Calu3 (cell line): ENCODE measurements at regions of chr7 and their contacts with region 1.

Region 1: GRCh38 chr7:41107668-41108448 is 595.0 kb downstream of the INHBA start:
- DNase-seq: peak; percentile 91
- H3K4me3 Mint-ChIP-seq: peak overlapping the region; percentile 53
- H3K27ac Mint-ChIP-seq: peak overlapping the region; percentile 96
- H3K4me1 Mint-ChIP-seq: peaks cover 70% of the 10 kb centered on the region
- H3K27me3 Mint-ChIP-seq: no peaks in the 10 kb centered on the region
- CTCF ChIP-seq: no peak

Region 2: DNA sequence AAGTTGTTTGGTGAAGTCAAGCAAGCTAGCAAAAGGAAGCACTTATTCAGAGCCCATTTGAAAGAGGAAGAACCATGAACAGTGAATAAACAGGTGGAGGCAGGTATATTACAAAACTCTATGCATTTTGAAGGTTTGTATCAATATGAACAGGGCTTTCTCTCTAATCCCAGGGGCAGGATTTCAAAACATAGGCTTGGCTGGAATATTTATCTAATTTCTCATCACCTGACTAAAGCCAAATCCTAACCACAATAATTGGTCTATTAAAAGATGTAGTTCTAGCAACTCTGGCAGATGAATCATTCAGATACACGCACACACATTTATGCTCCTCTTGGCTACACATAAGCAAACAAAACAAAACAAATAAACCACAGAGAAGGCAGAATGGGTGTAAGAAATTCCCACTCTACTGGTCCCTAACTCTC is 40.7 kb after region 1 on chr7:
- CTCF ChIA-PET with region 1: no interaction called
- intact Hi-C with region 1: loop called (anchors 2 kb)
- DNase-seq: no peak
- H3K4me3 Mint-ChIP-seq: no peak overlapping the region
- H3K27ac Mint-ChIP-seq: peak overlapping the region; percentile 71
- H3K4me1 Mint-ChIP-seq: peaks cover 42% of the 10 kb centered on the region
- H3K27me3 Mint-ChIP-seq: no peaks in the 10 kb centered on the region
- CTCF ChIP-seq: no peak

Region 3: GRCh38 chr7:41189866-41190265 is 82.0 kb after region 1 on chr7:
- CTCF ChIA-PET with region 1: no interaction called
- intact Hi-C with region 1: loop called (anchors 1 kb)
- DNase-seq: peak; percentile 54
- H3K4me3 Mint-ChIP-seq: no peak overlapping the region
- H3K27ac Mint-ChIP-seq: peak overlapping the region; percentile 95
- H3K4me1 Mint-ChIP-seq: peaks cover 49% of the 10 kb centered on the region
- H3K27me3 Mint-ChIP-seq: no peaks in the 10 kb centered on the region
- CTCF ChIP-seq: no peak

Region 4: GRCh38 chr7:41224063-41224806 is 116.4 kb after region 1 on chr7:
- CTCF ChIA-PET with region 1: no interaction called
- intact Hi-C with region 1: loop called (anchors 1 kb)
- DNase-seq: peak; percentile 70
- H3K4me3 Mint-ChIP-seq: no peak overlapping the region
- H3K27ac Mint-ChIP-seq: no peak overlapping the region
- H3K4me1 Mint-ChIP-seq: peaks cover 13% of the 10 kb centered on the region
- H3K27me3 Mint-ChIP-seq: no peaks in the 10 kb centered on the region
- CTCF ChIP-seq: no peak

Region 5: GRCh38 chr7:41247143-41247865 is 139.4 kb after region 1 on chr7:
- CTCF ChIA-PET with region 1: no interaction called
- intact Hi-C with region 1: loop called (anchors 2 kb)
- DNase-seq: peak; percentile 69
- H3K4me3 Mint-ChIP-seq: peak overlapping the region; percentile 22
- H3K27ac Mint-ChIP-seq: peak overlapping the region; percentile 96
- H3K4me1 Mint-ChIP-seq: peaks cover 42% of the 10 kb centered on the region
- H3K27me3 Mint-ChIP-seq: no peaks in the 10 kb centered on the region
- CTCF ChIP-seq: no peak